ENCODE measurements at regions of chr6 and their contacts with region 1.

Region 1: GRCh38 chr6:57316581-57317059 is 810 bp upstream of the PRIM2 start:
- DNase-seq: peak; percentile 91
- H3K4me3 ChIP-seq: peak overlapping the region; percentile 85
- H3K27ac ChIP-seq: peak overlapping the region; percentile 61
- H3K4me1 ChIP-seq: peaks cover 26% of the 10 kb centered on the region
- CTCF ChIP-seq: peak; percentile 90

Region 2: DNA sequence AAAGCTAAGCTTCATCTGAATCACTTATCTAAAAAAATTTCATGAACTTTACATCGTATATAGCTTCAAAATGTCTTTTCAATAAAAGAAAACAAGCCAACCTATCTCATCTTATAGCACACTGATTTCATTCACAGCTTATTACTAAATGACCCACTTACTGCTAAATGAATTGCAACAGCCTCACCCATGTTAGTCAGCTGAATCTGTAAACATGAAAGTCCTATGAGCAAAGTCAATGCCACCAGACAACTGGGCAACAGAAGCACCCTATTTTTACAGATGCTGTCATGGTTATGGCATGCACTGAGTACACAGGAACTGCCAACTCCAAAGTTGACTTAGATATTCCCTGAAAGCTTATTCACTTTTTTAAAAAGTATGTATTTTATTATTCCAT is 632.7 kb before region 1 on chr6:
- CTCF ChIA-PET with region 1: no interaction called
- POLR2A ChIA-PET with region 1: no interaction called
- intact Hi-C with region 1: no loop called
- DNase-seq: no peak
- H3K4me3 ChIP-seq: no peak overlapping the region
- H3K27ac ChIP-seq: no peak overlapping the region
- H3K4me1 ChIP-seq: no peaks in the 10 kb centered on the region
- CTCF ChIP-seq: no peak

Region 3: DNA sequence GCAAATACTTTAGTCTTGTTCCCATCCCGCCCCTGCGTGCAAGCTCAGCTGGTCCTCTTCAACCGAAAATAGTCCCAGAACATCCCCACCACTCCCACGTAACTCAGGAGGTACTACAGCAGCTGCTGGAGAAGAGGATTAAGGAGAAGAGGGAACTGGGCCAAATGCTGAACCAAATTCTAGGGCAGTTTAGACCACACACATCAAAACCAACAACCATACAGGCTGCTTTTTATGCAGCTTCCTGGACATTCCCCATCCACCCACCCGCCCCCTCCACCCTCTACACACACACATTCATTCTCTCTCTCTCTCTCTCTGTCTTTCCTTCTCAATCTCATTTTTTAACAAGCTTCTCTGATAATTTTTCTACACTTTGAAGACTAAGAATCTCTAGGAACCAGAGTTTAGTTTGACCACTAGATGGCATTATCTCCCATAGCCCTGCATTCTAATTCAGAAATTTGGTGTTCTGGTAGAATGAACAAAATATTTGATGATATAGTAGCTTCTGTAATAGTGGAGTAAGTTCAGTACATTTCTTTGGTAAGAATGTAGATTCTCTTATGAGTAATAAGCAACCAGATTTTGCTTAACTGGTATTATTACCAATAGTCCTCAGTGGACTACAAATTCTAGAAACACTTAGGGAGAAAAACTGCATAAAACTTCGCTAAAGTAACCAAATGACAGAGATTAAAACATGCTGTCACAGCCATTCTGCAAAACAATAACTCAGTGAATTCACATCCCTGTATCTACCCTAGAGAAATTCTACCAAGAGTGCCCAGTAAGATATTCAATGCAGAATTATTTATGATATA is 413.8 kb before region 1 on chr6:
- CTCF ChIA-PET with region 1: interaction called, 3 read pairs
- POLR2A ChIA-PET with region 1: interaction called, 3 read pairs
- intact Hi-C with region 1: loop called (anchors 1 kb)
- DNase-seq: peak; percentile 57
- H3K4me3 ChIP-seq: no peak overlapping the region
- H3K27ac ChIP-seq: no peak overlapping the region
- H3K4me1 ChIP-seq: no peaks in the 10 kb centered on the region
- CTCF ChIP-seq: peak; percentile 92

Region 4: GRCh38 chr6:57048577-57048976 is 268.0 kb before region 1 on chr6:
- CTCF ChIA-PET with region 1: no interaction called
- POLR2A ChIA-PET with region 1: interaction called, 6 read pairs
- intact Hi-C with region 1: loop called (anchors 2 kb)
- DNase-seq: no peak
- H3K4me3 ChIP-seq: peak overlapping the region; percentile 64
- H3K27ac ChIP-seq: no peak overlapping the region
- H3K4me1 ChIP-seq: peaks cover 24% of the 10 kb centered on the region
- CTCF ChIP-seq: no peak

Region 5: DNA sequence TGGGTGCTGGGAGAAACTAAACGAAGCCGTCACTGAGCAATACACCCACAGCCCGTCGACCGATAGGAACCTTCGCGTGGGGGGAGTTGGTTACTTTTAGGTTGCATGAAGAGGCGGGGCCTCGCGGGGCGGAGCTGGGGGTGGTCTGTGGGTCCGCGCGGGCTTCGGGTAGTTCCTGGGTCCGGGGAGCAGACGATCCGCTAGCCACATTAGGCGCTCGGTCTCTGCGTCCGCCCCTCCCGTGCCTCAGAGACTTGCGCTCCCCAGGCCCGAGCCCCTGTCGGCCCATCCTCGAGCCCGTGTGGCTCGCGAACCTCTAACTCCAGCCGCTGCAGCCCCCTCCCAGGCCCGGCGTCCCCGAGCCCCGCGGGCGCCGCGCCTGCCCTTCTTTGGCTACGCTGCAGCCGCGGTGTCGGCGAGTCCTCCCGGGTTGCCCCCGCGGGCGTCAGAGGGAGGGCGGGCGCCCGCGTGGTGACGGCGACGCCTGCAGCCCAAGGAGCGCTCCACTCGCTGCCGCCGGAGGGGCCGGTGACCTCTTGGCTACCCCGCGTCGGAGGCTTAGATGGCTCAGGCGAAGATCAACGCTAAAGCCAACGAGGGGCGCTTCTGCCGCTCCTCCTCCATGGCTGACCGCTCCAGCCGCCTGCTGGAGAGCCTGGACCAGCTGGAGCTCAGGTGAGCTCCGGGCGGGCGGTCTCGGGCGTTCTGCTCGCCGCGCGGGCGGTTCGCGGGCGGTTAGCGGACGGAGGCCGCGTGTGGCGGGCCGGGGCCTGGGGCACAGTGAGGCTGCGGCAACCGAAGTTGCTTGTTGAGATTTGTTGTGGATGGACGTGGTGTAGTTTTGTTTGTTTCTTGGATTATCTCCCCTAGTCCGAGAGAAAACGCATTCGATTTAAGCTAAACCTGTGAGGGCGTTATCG is 144.2 kb before region 1 on chr6 and contains the start of gene BAG2:
- CTCF ChIA-PET with region 1: no interaction called
- POLR2A ChIA-PET with region 1: interaction called, 3 read pairs
- intact Hi-C with region 1: loop called (anchors 1 kb)
- DNase-seq: peak; percentile 96
- H3K4me3 ChIP-seq: peak within 1 kb of the TSS; percentile 88
- H3K27ac ChIP-seq: peak within 1 kb of the TSS; percentile 82
- H3K4me1 ChIP-seq: peaks cover 20% of the 10 kb centered on the region
- CTCF ChIP-seq: 0 out of 2 replicates have a peak, but pooled peaks have one; percentile 23
- total RNA-seq, gene BAG2: 6.8 and 7.7 TPM in 2 replicates

Region 6: GRCh38 chr6:57221936-57222742 is 94.5 kb before region 1 on chr6 and contains the start of gene RAB23:
- CTCF ChIA-PET with region 1: no interaction called
- POLR2A ChIA-PET with region 1: no interaction called
- intact Hi-C with region 1: loop called (anchors 2 kb)
- DNase-seq: peak; percentile 85
- H3K4me3 ChIP-seq: peak within 1 kb of the TSS; percentile 87
- H3K27ac ChIP-seq: peak within 1 kb of the TSS; percentile 53
- H3K4me1 ChIP-seq: peaks cover 15% of the 10 kb centered on the region
- CTCF ChIP-seq: 0 out of 2 replicates have a peak, but pooled peaks have one; percentile 6
- total RNA-seq, gene RAB23: 3.5 and 4.9 TPM in 2 replicates

Region 7: DNA sequence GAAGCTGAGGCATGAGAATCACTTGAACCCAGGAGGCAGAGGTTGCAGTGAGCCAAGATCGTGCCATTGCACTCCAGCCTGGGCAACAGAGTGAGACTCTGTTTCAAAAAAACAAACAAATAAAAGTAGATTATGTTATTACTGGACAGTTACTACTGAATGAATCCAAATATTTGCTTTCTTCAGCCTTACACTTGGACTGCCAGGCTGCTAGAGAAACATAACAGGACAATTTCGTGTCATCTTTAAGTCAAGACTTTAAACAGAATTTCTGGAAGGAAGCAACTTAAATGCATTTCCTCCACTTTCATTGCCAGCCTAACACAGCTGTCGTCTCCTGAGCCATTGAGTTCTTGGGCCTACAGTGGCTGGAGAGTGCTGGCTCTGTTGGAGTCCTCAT is 41.2 kb before region 1 on chr6:
- CTCF ChIA-PET with region 1: no interaction called
- POLR2A ChIA-PET with region 1: no interaction called
- intact Hi-C with region 1: no loop called
- DNase-seq: no peak
- H3K4me3 ChIP-seq: no peak overlapping the region
- H3K27ac ChIP-seq: no peak overlapping the region
- H3K4me1 ChIP-seq: no peaks in the 10 kb centered on the region
- CTCF ChIP-seq: no peak

Region 8: DNA sequence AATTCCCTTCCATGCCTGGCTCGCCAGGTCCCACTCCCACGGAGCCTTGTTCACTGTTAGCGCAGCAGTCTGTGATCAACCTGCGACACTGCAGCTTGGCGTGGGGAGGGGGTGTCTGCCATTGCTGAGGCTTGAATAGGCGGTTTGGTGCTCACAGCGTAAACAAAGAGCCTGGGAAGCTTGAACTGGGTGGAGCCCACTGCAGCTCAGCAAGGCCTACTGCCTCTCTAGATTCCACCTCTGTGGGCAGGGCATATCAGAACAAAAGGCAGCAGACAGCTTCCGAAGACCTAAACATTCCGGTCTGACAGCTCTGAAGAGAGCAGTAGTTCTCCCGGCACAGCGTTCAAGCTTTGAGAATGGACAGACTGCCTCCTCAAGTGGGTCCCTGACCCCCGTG is 28.5 kb before region 1 on chr6:
- CTCF ChIA-PET with region 1: no interaction called
- POLR2A ChIA-PET with region 1: no interaction called
- intact Hi-C with region 1: no loop called
- DNase-seq: no peak
- H3K4me3 ChIP-seq: no peak overlapping the region
- H3K27ac ChIP-seq: no peak overlapping the region
- H3K4me1 ChIP-seq: no peaks in the 10 kb centered on the region
- CTCF ChIP-seq: no peak

Region 9: GRCh38 chr6:57302477-57302876 is 14.1 kb before region 1 on chr6:
- CTCF ChIA-PET with region 1: no interaction called
- POLR2A ChIA-PET with region 1: no interaction called
- intact Hi-C with region 1: no loop called
- DNase-seq: no peak
- H3K4me3 ChIP-seq: no peak overlapping the region
- H3K27ac ChIP-seq: no peak overlapping the region
- H3K4me1 ChIP-seq: no peaks in the 10 kb centered on the region
- CTCF ChIP-seq: no peak